Mammary epithelial cell (primary cell): ENCODE measurements at regions of chr12 and their contacts with region 1.

Region 1: DNA sequence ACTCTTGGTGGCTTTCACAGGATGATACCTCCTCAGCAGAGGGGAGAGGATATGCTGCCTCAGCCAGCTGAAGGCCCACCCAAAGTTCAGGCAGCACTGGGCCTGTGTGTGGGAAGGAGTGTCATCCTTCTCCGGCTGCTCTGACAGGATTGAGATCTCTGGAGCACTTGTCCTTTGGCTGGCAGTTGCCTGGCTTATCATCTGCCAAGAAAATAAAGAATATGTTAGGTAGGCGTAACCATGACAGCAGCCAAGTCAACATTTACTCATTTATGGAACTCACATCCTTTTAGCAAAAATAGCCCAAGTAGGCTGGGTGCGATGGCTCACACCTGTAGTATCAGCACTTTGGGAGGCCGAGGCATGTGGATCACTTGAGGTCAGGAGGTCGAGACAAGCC is 68.5 kb downstream of the PPFIBP1 start:
- DNase-seq: peak; percentile 96
- H3K4me3 ChIP-seq: no peak overlapping the region
- H3K27ac ChIP-seq: peak overlapping the region; percentile 99
- H3K4me1 ChIP-seq: peaks cover 65% of the 10 kb centered on the region
- H3K27me3 ChIP-seq: no peaks in the 10 kb centered on the region
- CTCF ChIP-seq: no peak

Region 2: DNA sequence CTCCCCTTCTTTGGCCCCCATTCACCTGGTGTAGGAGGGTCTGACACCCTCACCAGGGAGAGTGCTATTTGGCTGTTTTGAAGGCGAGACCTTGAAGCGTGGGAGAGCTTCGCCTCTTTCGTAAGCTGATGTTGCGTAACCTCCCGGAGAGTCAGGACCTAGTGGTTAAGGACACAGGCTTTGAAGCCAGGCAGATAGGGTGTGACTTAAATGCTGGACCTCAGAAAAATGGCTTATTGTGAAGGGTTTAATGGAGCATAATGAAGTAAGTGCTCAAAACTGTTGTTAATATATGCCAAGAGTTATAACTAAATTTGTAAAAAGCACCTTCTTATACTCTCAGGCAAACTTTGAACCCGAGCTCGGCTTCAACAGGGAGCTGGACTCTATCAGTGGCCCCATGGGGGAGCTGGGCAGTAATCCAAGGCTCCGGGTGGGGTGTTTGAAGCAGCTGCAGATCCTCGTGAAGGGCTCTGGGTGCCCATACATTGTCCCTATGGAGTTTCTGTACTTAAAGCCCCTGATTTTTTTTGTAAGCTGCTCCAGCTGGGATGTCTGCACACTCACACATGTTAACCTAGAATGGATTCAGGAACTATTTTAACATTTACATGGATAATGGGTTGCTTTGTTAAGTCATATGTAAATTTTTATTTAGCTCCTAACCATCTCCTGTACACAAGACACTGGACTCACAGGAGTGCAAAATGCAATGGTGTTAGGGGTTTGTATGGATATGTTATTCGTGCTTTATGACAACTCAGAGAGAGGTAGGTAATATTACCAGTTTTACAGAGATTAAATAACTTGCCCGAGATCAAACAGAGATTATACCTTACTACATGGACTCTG is 42.5 kb before region 1 on chr12:
- CTCF ChIA-PET with region 1: no interaction called
- dilution Hi-C with region 1: no loop called
- in situ Hi-C with region 1: loop called in 1 of 2 experiments (anchors 5 kb)
- intact Hi-C with region 1: loop called (anchors 1 kb)
- DNase-seq: peak; percentile 93
- H3K4me3 ChIP-seq: peak overlapping the region; percentile 25 to 28 (median 25)
- H3K27ac ChIP-seq: peak overlapping the region; percentile 95
- H3K4me1 ChIP-seq: peaks cover 83% of the 10 kb centered on the region
- H3K27me3 ChIP-seq: no peaks in the 10 kb centered on the region
- CTCF ChIP-seq: no peak

Region 3: DNA sequence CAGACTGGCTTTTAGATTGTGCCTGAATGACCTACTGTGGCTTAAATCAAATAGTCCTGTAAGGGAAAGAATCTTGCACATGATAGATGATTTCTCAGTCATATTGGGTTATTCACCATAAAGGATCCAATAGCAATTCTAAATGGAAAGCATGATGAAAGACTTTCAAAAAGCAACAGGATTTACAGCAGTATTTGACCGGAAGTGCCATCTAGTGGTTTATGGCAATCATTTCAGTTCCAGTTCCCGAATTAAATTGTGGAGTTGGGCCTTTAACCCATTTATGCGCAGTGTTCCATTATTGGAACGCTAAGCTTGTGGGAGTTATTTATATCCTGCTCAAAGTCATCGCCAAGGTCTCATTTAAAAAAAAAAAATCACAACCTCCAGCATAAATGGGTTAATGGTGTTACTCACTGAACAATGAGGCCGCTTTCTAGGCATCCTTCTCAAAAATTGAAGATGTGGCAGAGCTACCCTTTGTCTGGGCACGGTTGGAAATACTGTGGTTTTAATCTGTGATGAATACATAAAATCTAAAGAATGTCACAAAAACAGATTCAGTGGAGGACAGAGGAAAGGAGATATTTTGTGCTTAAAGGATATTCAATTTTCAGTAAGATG is 42.9 kb after region 1 on chr12:
- CTCF ChIA-PET with region 1: no interaction called
- dilution Hi-C with region 1: no loop called
- in situ Hi-C with region 1: no loop called
- intact Hi-C with region 1: loop called (anchors 1 kb)
- DNase-seq: peak; percentile 46
- H3K4me3 ChIP-seq: no peak overlapping the region
- H3K27ac ChIP-seq: no peak overlapping the region
- H3K4me1 ChIP-seq: peaks cover 6% of the 10 kb centered on the region
- H3K27me3 ChIP-seq: no peaks in the 10 kb centered on the region
- CTCF ChIP-seq: peak; percentile 54 to 69